Activated T-helper 1 cell treated with anti-CD3 and anti-CD28 coated beads, Interleukin-12 subunit alpha, Interleukin-12 subunit beta, Interleukin-2, Interleukin-4 antibody, amounts not matched to agents 30 ng/mL and 10 ng/mL and 1 ng/mL, durations not matched to agents 14 hours and 24 hours and 36 hours (primary cell): ENCODE measurements at regions of chr6 and their contacts with region 1.

Region 1: DNA sequence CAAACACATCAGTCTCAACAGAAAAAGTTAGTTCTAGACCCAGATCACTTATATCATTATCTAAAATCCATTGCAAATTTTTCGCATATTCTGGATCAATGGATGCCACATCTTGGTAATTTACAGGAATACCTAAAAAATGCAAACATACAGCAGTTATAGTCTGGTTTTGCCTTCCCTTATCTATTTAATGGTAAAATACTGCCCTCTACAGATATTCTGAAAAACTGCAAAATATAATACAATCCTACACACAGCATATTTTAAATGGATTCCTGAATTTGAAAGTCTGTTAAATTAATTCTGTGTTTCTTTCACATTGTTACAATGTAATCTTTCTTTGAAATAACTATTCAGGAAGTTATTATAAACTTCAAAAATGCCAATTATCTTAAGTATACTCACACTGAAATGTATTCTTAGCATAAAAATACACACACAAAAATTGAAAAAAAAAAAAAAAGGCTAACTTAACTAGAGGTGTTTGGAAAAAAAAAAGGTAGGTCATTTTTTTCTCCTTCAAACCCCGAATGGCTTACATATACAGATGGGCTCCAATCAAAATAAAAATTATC is 88.4 kb downstream of the HACE1 start:
- DNase-seq: no peak
- H3K4me3 Mint-ChIP-seq: no peak overlapping the region
- H3K27ac Mint-ChIP-seq: no peak overlapping the region
- H3K4me1 Mint-ChIP-seq: peaks cover 5% of the 10 kb centered on the region
- H3K27me3 Mint-ChIP-seq: no peaks in the 10 kb centered on the region

Region 2: DNA sequence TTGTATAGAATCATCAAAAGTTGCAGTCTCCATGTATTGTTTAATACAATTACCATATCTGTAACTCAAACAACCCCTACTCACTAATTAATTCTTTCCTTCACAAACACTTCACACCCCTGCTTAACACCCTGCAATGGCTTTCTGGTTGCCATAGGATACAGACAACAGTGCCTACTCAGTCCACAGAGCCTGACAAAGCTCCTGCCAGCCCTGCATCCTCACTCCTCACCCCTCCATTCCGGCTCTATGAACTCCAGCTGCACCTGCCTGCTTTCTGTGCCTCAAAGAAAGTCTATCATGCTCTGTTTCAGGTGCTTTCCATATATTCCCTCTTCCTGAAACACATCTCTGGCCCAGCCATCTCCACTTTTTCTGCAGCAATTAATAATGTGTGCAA is 165.0 kb before region 1 on chr6:
- intact Hi-C with region 1: loop called (anchors 10 kb)
- DNase-seq: no peak
- H3K4me3 Mint-ChIP-seq: no peak overlapping the region
- H3K27ac Mint-ChIP-seq: no peak overlapping the region
- H3K4me1 Mint-ChIP-seq: peaks cover 22% of the 10 kb centered on the region
- H3K27me3 Mint-ChIP-seq: no peaks in the 10 kb centered on the region

Region 3: DNA sequence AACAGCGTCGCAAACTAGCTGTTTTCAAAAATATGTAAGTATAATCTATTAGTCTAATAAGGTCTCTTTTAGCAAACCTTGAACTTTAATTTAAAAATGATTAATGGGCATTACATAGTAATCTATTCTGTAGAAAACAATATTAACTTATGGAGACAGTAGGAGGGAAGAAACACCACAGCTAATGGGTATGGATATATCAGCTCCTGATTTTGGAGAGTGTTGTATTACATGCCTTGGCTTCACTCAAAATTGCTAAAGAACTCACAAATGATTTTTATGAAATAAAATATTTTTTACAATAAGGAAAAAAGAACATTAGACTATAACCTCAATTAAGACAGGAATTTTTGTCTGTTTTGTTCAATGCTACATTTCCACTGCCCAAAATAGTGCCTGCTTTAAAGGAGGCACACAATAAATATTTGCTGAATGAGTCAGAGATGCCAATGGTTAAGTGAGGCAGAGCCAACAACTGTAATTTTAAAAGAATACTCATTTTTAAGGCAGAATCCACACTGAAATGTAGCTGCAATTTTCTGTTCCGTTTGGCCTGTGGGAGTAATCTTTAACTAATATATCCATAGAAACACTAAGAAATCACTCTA is 1538.5 kb after region 1 on chr6:
- intact Hi-C with region 1: no loop called
- DNase-seq: no peak
- H3K4me3 Mint-ChIP-seq: no peak overlapping the region
- H3K27ac Mint-ChIP-seq: no peak overlapping the region
- H3K4me1 Mint-ChIP-seq: peaks cover 35% of the 10 kb centered on the region
- H3K27me3 Mint-ChIP-seq: no peaks in the 10 kb centered on the region